Left cardiac atrium (tissue), 4 donors: ENCODE measurements at regions of chr12 and their contacts with region 1.

Region 1: DNA sequence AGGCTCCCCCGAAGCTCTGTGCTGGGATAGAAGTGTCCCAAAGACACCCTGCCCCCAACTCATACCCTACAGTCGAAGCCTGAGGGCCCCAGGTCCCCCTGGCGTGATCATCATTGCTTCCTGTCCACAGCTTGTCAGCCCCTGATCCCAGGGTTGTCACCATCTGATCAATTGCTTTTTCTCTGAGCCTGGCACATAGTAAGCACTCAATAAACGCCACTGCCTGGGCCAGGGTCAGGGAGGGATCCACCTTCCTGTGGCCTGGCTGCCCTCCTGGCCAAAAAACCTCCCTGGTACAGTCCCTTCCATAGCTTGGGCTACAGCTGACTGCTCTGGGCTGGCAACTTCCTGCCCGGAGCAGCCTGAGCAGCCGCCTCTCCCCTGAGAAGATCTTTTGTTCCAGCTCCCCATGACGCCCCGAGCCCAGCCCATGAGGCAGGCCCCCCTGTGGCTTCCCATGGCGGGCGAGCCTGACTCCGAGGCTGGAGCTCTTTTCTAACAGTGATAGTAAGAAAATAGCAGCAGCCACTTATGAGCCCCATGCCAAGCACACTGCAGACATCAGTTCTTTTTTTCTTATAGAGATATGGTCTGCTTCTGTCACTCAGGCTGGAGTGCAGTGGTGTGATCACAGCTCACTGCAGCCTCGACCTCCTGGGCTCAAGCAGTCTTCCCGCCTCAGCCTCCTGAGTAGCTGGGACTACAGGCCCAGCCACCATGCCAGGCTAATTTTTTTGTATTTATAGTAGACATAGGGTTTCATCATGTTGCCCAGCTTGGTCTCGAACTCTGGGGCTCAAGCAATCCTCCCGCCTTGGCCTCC is 6.5 kb downstream of the SH2B3 start:
- DNase-seq: peak; percentile 67
- ATAC-seq: peak; percentile 6 to 13

Region 2: GRCh38 chr12:111428728-111429175 is 16.5 kb after region 1 on chr12:
- intact Hi-C with region 1: loop called in 1 of 2 experiments (anchors 2 kb)
- DNase-seq: peak; percentile 74
- ATAC-seq: peak; percentile 17 to 56

Region 3: DNA sequence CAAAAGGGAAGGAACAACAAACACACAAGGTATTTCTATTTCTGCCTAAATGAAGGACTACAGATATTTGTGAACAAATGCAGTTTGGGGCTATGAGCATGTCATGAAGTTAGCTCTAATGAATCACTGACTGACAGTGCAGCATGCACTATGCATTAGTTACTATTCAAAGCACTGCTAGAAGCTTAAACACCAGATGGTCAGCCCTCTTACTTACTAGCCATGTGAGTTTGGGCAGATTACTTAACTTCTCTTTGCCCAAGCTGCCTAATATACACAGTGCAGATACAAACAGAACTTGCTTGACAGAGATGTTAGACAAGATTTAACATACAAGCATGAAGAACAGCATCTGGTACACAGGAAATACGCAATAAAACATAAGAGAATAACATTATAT is 90.9 kb after region 1 on chr12:
- intact Hi-C with region 1: no loop called
- DNase-seq: no peak
- ATAC-seq: no peak